Pancreas (tissue), 10 donors: ENCODE measurements at regions of chr9 and their contacts with region 1.

Region 1: GRCh38 chr9:37382161-37382981 is 40.1 kb upstream of the GRHPR start:
- DNase-seq: no peak
- ATAC-seq: no peak
- H3K4me3 ChIP-seq: no peak overlapping the region
- H3K27ac ChIP-seq: no peak overlapping the region
- H3K4me1 ChIP-seq: no peaks in the 10 kb centered on the region
- H3K27me3 ChIP-seq: no peaks in the 10 kb centered on the region
- CTCF ChIP-seq: no peak

Region 2: GRCh38 chr9:36995927-36996705 is 386.3 kb before region 1 on chr9:
- intact Hi-C with region 1: loop called in 1 of 3 experiments (anchors 10 kb)
- DNase-seq: peak; percentile 53 to 84 (median 73)
- ATAC-seq: peak; percentile 95 to 98 (median 98)
- H3K4me3 ChIP-seq: peak overlapping the region in 1 of 4 donors; percentile 39
- H3K27ac ChIP-seq: no peak overlapping the region
- H3K4me1 ChIP-seq: no peaks in the 10 kb centered on the region
- H3K27me3 ChIP-seq: no peaks in the 10 kb centered on the region
- CTCF ChIP-seq: peak in 3 of 4 donors; percentile 30 to 51 (median 45)